Heart left ventricle (tissue), 16 donors: ENCODE measurements at regions of chr1 and their contacts with region 1.

Region 1: GRCh38 chr1:8727809-8728213 is 89.6 kb downstream of the RERE start:
- DNase-seq: peak in 3 of 5 donors; percentile 24 to 49 (median 26)
- ATAC-seq: peak in 3 of 4 donors; percentile 48 to 66 (median 55)
- H3K4me3 ChIP-seq: no peak overlapping the region
- H3K27ac ChIP-seq: no peak overlapping the region
- H3K4me1 ChIP-seq: peaks cover 0 to 18% (median 5%) of the 10 kb centered on the region in 12 donors
- H3K27me3 ChIP-seq: no peaks in the 10 kb centered on the region
- CTCF ChIP-seq: no peak
- POLR2A ChIP-seq: no peak

Region 2: GRCh38 chr1:8348777-8349491 is 378.9 kb before region 1 on chr1:
- intact Hi-C with region 1: loop called in 1 of 10 experiments (anchors 10 kb)
- DNase-seq: peak in 3 of 5 donors; percentile 66 to 75 (median 73)
- ATAC-seq: peak in 3 of 4 donors; percentile 42 to 61 (median 49)
- H3K4me3 ChIP-seq: no peak overlapping the region
- H3K27ac ChIP-seq: peak overlapping the region in 1 of 12 donors; percentile 65
- H3K4me1 ChIP-seq: peaks cover 0 to 50% (median 26%) of the 10 kb centered on the region in 12 donors
- H3K27me3 ChIP-seq: no peaks in the 10 kb centered on the region
- CTCF ChIP-seq: peak; percentile 76 to 91 (median 84)
- POLR2A ChIP-seq: no peak

Region 3: GRCh38 chr1:8364528-8365442 is 363.0 kb before region 1 on chr1:
- intact Hi-C with region 1: loop called in 2 of 10 experiments (anchors 10 kb)
- DNase-seq: peak; percentile 62 to 86 (median 66)
- ATAC-seq: peak; percentile 41 to 56 (median 53)
- H3K4me3 ChIP-seq: no peak overlapping the region
- H3K27ac ChIP-seq: peak overlapping the region; percentile 36 to 93 (median 76)
- H3K4me1 ChIP-seq: peaks cover 4 to 74% (median 63%) of the 10 kb centered on the region in 12 donors
- H3K27me3 ChIP-seq: no peaks in the 10 kb centered on the region
- CTCF ChIP-seq: no peak
- POLR2A ChIP-seq: no peak

Region 4: GRCh38 chr1:8560611-8561544 is 166.9 kb before region 1 on chr1:
- intact Hi-C with region 1: loop called (anchors 1 to 5 kb)
- DNase-seq: peak in 2 of 5 donors; percentile 21 to 26
- ATAC-seq: peak in 3 of 4 donors; percentile 63 to 79 (median 69)
- H3K4me3 ChIP-seq: no peak overlapping the region
- H3K27ac ChIP-seq: no peak overlapping the region
- H3K4me1 ChIP-seq: peaks cover 0 to 26% (median 13%) of the 10 kb centered on the region in 12 donors
- H3K27me3 ChIP-seq: no peaks in the 10 kb centered on the region
- CTCF ChIP-seq: peak; percentile 85 to 99 (median 95)
- POLR2A ChIP-seq: no peak

Region 5: DNA sequence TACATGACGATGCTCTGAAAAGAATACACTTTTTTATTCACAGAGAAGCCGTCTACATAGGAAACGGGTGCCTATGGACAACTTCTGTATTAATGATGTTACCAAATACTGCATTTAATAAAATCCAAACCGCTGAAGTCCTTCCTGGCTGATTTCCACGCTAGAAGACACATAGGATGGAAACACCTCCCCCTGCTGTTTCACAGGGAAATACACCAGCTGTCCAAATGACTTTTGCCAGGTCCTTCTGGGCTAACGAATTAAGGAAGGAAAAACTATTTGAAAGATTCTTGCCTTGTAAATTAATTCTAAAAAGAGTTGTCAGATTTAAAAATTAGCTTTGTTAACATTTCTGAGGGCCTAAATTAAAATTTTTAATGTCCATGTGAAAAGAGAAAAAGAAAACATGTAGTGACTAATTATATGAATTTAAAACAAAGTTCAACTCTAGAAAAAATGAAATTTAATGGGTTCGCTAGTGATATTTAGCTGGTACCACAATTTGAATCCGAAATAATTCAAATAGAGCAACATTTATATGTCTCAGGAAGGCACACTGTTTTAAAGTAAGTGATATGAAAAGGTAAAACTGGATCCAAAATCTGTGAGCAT is 56.4 kb before region 1 on chr1:
- intact Hi-C with region 1: loop called in 3 of 10 experiments (anchors 2 to 5 kb)
- DNase-seq: peak in 3 of 5 donors; percentile 39 to 48 (median 40)
- ATAC-seq: peak; percentile 60 to 75 (median 74)
- H3K4me3 ChIP-seq: no peak overlapping the region
- H3K27ac ChIP-seq: peak overlapping the region in 2 of 12 donors; percentile 28 to 33
- H3K4me1 ChIP-seq: peaks cover 3 to 58% (median 50%) of the 10 kb centered on the region in 12 donors
- H3K27me3 ChIP-seq: no peaks in the 10 kb centered on the region
- CTCF ChIP-seq: peak; percentile 74 to 92 (median 86)
- POLR2A ChIP-seq: no peak